K562 (cell line): ENCODE measurements at regions of chr19 and their contacts with region 1.

Region 1: DNA sequence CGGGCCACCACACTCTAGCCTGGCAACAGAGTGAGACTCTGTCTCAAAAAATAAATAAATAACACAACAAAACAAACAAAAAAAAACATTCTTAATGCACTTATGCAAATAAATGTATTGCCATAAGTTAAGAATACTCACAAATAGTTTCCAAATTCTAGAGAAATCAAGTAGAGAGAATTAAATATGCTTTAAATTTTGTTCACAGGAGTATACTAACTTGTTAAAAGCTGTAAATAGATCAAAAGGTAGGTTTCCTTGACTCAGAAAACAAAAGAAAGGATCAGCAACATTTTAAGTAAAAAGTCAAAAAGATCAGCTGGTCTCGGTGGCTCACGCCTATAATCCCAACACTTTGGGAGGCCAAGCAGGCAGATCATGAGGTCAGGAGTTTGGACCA is 50.5 kb upstream of the ZNF429 start:
- DNase-seq: no peak
- ATAC-seq: no peak
- H3K4me3 ChIP-seq: no peak overlapping the region
- H3K27ac ChIP-seq: no peak overlapping the region
- H3K4me1 ChIP-seq: peaks cover 7 to 10% of the 10 kb centered on the region in 2 experiments; a peak in 4 of 5 replicates
- H3K27me3 ChIP-seq: no peaks in the 10 kb centered on the region
- CTCF ChIP-seq: no peak
- EP300 ChIP-seq: no peak
- POLR2A ChIP-seq: no peak
- RAD21 ChIP-seq: no peak

Region 2: GRCh38 chr19:21468791-21469190 is 13.9 kb after region 1 on chr19:
- CTCF ChIA-PET with region 1: no interaction called
- POLR2A ChIA-PET with region 1: no interaction called
- in situ Hi-C with region 1: no loop called
- intact Hi-C with region 1: no loop called
- DNase-seq: no peak
- ATAC-seq: peak; percentile 54; the same call in 2 of the 3 replicates
- H3K4me3 ChIP-seq: no peak overlapping the region
- H3K27ac ChIP-seq: no peak overlapping the region
- H3K4me1 ChIP-seq: peaks cover 0 to 8% of the 10 kb centered on the region in 2 experiments; a peak in 2 of 5 replicates
- H3K27me3 ChIP-seq: no peaks in the 10 kb centered on the region
- CTCF ChIP-seq: peak; percentile 27 to 43 (median 37); a peak in 5 of 6 replicates
- EP300 ChIP-seq: no peak
- POLR2A ChIP-seq: no peak
- RAD21 ChIP-seq: no peak

Region 3: GRCh38 chr19:21611659-21612402 is 156.9 kb after region 1 on chr19:
- CTCF ChIA-PET with region 1: no interaction called
- POLR2A ChIA-PET with region 1: no interaction called
- in situ Hi-C with region 1: no loop called
- intact Hi-C with region 1: loop called (anchors 5 kb)
- DNase-seq: peak in 1 of 4 experiments; percentile 50
- ATAC-seq: peak; percentile 79
- H3K4me3 ChIP-seq: no peak overlapping the region; the same call in 1 of the 2 replicates
- H3K27ac ChIP-seq: peak overlapping the region; percentile 90
- H3K4me1 ChIP-seq: peaks cover 8 to 35% of the 10 kb centered on the region in 2 experiments
- H3K27me3 ChIP-seq: no peaks in the 10 kb centered on the region
- CTCF ChIP-seq: no peak
- EP300 ChIP-seq: peak; percentile 89
- POLR2A ChIP-seq: no peak
- RAD21 ChIP-seq: no peak; a peak in 2 of 4 replicates